ENCODE measurements at regions of chr12 and their contacts with region 1.

Region 1: GRCh38 chr12:56688129-56688845 is at the start of gene PTGES3:
- DNase-seq: peak; percentile 98
- H3K4me3 ChIP-seq: peak within 1 kb of the TSS; percentile 94
- H3K27ac ChIP-seq: peak within 1 kb of the TSS; percentile 91
- H3K4me1 ChIP-seq: peaks cover 34% of the 10 kb centered on the region
- CTCF ChIP-seq: no peak
- total RNA-seq, gene PTGES3: 77.3 and 91.2 TPM in 2 replicates

Region 2: GRCh38 chr12:56359851-56360767 is 328.2 kb before region 1 on chr12 and contains the start of gene STAT2:
- CTCF ChIA-PET with region 1: no interaction called
- POLR2A ChIA-PET with region 1: no interaction called
- intact Hi-C with region 1: no loop called
- DNase-seq: peak; percentile 100
- H3K4me3 ChIP-seq: peak within 1 kb of the TSS; percentile 95
- H3K27ac ChIP-seq: peak within 1 kb of the TSS; percentile 53
- H3K4me1 ChIP-seq: peaks cover 39% of the 10 kb centered on the region
- CTCF ChIP-seq: no peak
- total RNA-seq, gene STAT2: 75.3 and 89.0 TPM in 2 replicates

Region 3: DNA sequence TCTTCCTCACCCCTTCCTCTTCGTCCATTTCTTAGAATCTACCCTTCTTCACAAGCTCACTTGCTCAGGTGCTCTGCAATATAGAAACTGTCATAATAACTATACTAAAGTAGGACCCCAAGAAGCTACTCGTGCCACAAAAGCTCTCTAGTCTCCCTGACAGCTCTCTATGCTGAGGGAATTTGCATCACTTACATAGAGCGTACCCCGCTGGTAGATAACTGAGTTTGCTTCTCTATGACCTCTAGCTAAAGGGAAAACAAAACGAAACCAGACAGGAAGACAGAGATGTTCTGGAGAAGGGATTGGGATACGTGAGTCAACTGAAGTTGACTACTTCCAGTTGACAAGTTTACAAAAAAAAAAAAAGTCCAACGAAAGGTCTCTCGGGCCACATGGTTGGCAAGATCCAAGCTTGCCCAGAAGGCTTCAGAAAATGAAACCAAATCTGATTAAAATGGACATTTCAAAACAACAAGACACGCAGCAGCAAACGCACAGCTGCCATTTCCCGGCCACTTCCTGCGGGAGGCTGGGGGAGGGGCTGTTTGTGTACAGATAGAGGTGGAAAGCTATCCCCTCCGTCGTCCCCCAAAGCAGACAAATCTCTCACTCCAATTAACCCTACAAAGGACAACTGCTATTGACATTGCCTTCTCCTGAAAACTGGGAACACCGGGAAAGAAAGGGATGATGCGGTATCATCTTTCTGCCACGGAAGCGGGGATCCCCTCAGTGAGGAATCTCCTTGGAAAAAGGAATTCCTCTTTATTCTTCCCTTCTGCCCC is 59.4 kb before region 1 on chr12:
- CTCF ChIA-PET with region 1: no interaction called
- POLR2A ChIA-PET with region 1: interaction called, 6 read pairs
- intact Hi-C with region 1: loop called (anchors 1 kb)
- DNase-seq: peak; percentile 83
- H3K4me3 ChIP-seq: peak overlapping the region; percentile 99
- H3K27ac ChIP-seq: peak overlapping the region; percentile 77
- H3K4me1 ChIP-seq: peaks cover 58% of the 10 kb centered on the region
- CTCF ChIP-seq: no peak

Region 4: GRCh38 chr12:56645717-56646446 is 42.4 kb before region 1 on chr12 and contains the start of gene ATP5F1B:
- CTCF ChIA-PET with region 1: no interaction called
- POLR2A ChIA-PET with region 1: interaction called, 4 read pairs
- intact Hi-C with region 1: loop called (anchors 2 kb)
- DNase-seq: peak; percentile 99
- H3K4me3 ChIP-seq: peak within 1 kb of the TSS; percentile 88
- H3K27ac ChIP-seq: peak within 1 kb of the TSS; percentile 81
- H3K4me1 ChIP-seq: peaks cover 22% of the 10 kb centered on the region
- CTCF ChIP-seq: no peak
- total RNA-seq, gene ATP5F1B: 348 and 385 TPM in 2 replicates

Region 5: DNA sequence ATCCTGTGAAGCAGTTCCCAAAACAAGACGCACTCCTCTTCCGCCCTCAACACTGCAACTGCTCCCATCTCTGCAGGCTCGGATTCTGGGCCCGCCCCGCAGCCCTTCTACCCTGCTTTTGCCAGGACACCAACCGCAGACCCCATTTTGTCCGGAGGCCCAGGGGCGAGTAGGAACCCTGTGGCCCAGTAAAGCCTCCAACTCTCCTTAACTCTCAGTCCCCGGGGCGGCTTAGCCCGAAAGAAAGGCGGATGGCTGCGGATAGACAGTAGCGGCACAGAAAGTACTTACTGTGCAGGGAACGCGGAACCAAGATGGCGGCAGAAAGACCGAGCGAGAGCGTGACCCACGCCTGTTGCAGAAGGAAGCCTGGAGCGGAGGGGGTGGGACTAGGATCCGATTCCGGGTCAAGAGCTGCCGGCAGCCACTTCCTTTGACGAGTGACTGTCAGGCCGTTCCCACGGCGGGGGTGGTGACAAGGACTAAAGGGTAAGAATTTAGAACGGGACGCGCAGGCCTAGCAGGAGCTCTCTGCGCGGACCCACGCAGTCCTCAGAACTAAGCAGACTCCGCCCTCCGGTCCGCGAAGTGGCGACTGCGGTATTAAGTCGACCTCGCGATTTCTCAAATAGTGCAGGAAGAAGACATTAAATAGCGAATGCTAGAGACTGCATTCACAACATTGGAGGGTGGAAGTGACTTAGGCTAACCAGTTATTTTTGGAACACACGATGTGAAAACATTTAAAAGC is 36.9 kb after region 1 on chr12 and contains the start of gene NACA:
- CTCF ChIA-PET with region 1: interaction called, 4 read pairs
- POLR2A ChIA-PET with region 1: interaction called, 10 read pairs
- intact Hi-C with region 1: loop called (anchors 2 kb)
- DNase-seq: peak; percentile 97
- H3K4me3 ChIP-seq: peak within 1 kb of the TSS; percentile 93
- H3K27ac ChIP-seq: peak within 1 kb of the TSS; percentile 91
- H3K4me1 ChIP-seq: peaks cover 42% of the 10 kb centered on the region
- CTCF ChIP-seq: no peak
- total RNA-seq, gene NACA: 1,560 and 1,723 TPM in 2 replicates

Region 6: GRCh38 chr12:56751712-56752598 is 63.7 kb after region 1 on chr12 and contains the start of gene PRIM1:
- CTCF ChIA-PET with region 1: no interaction called
- POLR2A ChIA-PET with region 1: interaction called, 11 read pairs
- intact Hi-C with region 1: loop called (anchors 1 kb)
- DNase-seq: peak; percentile 94
- H3K4me3 ChIP-seq: peak within 1 kb of the TSS; percentile 76
- H3K27ac ChIP-seq: peak within 1 kb of the TSS; percentile 94
- H3K4me1 ChIP-seq: peaks cover 25% of the 10 kb centered on the region
- CTCF ChIP-seq: no peak
- total RNA-seq, gene PRIM1: 17.1 and 20.4 TPM in 2 replicates

Region 7: DNA sequence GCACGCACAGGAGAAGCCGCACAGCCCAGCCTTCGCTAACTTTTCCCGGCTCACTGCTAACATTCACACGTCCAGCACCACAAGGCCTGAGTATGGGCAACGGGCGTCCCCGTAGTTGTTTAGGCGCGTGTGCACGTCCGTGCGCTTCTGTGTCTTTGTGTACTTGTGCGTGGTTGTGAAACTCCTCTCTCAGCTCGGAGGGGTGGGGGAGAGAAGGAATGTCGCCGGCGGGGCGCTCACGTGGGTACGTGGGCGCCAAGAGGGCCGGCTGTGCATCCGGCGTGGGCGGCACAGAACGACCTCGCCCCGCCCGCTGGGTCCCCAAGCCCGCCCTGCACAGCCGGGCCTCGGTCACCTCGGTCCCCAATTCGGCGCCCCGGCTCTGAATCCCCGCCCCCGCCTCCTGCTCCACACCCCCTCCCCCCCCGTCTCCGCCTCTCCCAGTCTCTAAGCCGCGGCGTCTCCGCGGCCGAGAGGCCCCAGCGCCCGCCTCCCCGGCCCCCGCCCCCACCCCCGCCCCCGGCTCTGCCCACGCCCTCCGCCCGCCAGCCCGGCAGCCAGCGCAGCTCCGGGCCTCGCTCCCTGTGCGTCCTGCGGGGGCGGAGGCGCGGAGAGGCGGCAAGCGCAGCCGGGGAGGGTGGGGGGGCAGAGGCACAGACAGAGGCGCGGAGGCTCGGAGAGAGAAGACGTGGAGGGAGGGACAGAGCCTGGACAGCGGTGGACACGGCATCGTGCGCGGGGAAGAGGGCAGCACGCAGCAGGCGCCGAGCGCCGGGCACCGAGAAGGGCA is 400.4 kb after region 1 on chr12 and contains the start of gene NAB2:
- CTCF ChIA-PET with region 1: no interaction called
- POLR2A ChIA-PET with region 1: no interaction called
- intact Hi-C with region 1: loop called (anchors 5 kb)
- DNase-seq: peak; percentile 96
- H3K4me3 ChIP-seq: peak within 1 kb of the TSS; percentile 80
- H3K27ac ChIP-seq: peak within 1 kb of the TSS; percentile 88
- H3K4me1 ChIP-seq: peaks cover 42% of the 10 kb centered on the region
- CTCF ChIP-seq: no peak
- total RNA-seq, gene NAB2: 8.5 and 9.6 TPM in 2 replicates